Naive thymus-derived CD4-positive, alpha-beta T cell (primary cell): ENCODE measurements at regions of chr22 and their contacts with region 1.

Region 1: DNA sequence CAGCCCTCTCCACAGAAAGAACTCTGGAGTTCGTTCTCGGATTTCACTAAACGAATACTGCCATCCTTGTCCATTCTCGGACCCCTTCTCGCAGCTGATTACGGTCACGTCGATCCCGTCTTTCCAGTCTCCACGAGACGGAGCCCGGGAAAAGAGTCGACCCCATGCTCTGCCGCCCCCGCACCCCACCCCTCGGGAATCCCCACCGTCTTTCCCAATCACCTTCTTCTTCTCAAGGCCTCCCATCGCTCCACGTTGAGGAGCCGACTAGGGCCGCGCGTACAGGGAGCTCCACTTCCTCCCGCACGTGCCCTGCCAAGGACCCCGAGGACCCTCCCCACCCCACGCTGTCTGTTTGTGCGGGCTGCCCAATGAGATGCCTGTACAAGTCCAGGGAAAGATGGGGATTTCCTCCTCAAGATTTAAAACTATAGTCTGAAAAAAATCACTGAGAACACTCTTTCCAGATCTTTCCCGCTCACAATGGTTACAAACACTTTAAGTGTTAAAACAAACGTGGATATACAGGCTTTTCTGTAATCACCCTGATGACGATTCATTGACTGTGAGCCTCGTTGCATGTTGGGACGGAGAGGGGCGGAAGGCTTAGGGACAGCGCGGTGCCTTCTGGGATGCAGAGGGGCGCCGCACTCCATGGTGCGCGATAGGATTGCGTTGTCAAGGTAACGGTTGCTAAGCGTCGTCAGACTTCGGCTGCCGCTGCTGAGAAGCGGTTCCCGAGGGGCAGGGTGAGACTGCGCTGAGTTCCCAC is at the start of gene PES1:
- DNase-seq: peak; percentile 80 to 98 (median 96)
- ATAC-seq: peak; percentile 99
- H3K4me3 ChIP-seq: peak within 1 kb of the TSS; percentile 85
- H3K4me3 Mint-ChIP-seq: no peak within 1 kb of the TSS
- H3K27ac ChIP-seq: peak within 1 kb of the TSS; percentile 85
- H3K27ac Mint-ChIP-seq: no peak within 1 kb of the TSS
- H3K4me1 ChIP-seq: peaks cover 8 to 12% of the 10 kb centered on the region in 2 donors
- H3K4me1 Mint-ChIP-seq: peaks cover 0 to 12% (median 0%) of the 10 kb centered on the region in 7 donors
- H3K27me3 ChIP-seq: no peaks in the 10 kb centered on the region
- H3K27me3 Mint-ChIP-seq: peaks cover 0 to 23% (median 0%) of the 10 kb centered on the region in 5 donors
- total RNA-seq, gene PES1: 40.6 to 84.2 (median 56.3) TPM

Region 2: GRCh38 chr22:29603358-29604075 is 988.3 kb before region 1 on chr22 and contains the start of gene NF2:
- CTCF ChIA-PET with region 1: no interaction called
- POLR2A ChIA-PET with region 1: no interaction called
- intact Hi-C with region 1: loop called in 1 of 2 experiments (anchors 1 kb)
- DNase-seq: peak; percentile 96 to 99 (median 98)
- ATAC-seq: peak; percentile 98
- H3K4me3 ChIP-seq: peak within 1 kb of the TSS; percentile 92
- H3K4me3 Mint-ChIP-seq: peak within 1 kb of the TSS; percentile 85 to 98 (median 96)
- H3K27ac ChIP-seq: peak within 1 kb of the TSS; percentile 91
- H3K27ac Mint-ChIP-seq: peak within 1 kb of the TSS; percentile 91 to 99 (median 98)
- H3K4me1 ChIP-seq: peaks cover 11 to 16% of the 10 kb centered on the region in 2 donors
- H3K4me1 Mint-ChIP-seq: peaks cover 13 to 40% (median 28%) of the 10 kb centered on the region in 7 donors
- H3K27me3 ChIP-seq: no peaks in the 10 kb centered on the region
- H3K27me3 Mint-ChIP-seq: no peaks in the 10 kb centered on the region
- total RNA-seq, gene NF2: 27.6 to 56.3 (median 28.3) TPM

Region 3: GRCh38 chr22:30356449-30357235 is 235.1 kb before region 1 on chr22 and contains the starts of genes CCDC157 and SF3A1:
- CTCF ChIA-PET with region 1: no interaction called
- POLR2A ChIA-PET with region 1: no interaction called
- intact Hi-C with region 1: loop called in 1 of 2 experiments (anchors 2 kb)
- DNase-seq: peak; percentile 78 to 90 (median 86)
- ATAC-seq: peak; percentile 94
- H3K4me3 ChIP-seq: peak within 1 kb of the TSS; percentile 94
- H3K4me3 Mint-ChIP-seq: peak within 1 kb of the TSS; percentile 92 to 99 (median 95)
- H3K27ac ChIP-seq: peak within 1 kb of the TSS; percentile 100
- H3K27ac Mint-ChIP-seq: peak within 1 kb of the TSS; percentile 86 to 99 (median 95)
- H3K4me1 ChIP-seq: peaks cover 32 to 37% of the 10 kb centered on the region in 2 donors
- H3K4me1 Mint-ChIP-seq: peaks cover 35 to 62% (median 54%) of the 10 kb centered on the region in 7 donors
- H3K27me3 ChIP-seq: no peaks in the 10 kb centered on the region
- H3K27me3 Mint-ChIP-seq: peaks cover 0 to 6% (median 0%) of the 10 kb centered on the region in 5 donors
- total RNA-seq, gene CCDC157: 1.8 to 6.9 (median 3.2) TPM
- total RNA-seq, gene SF3A1: 267 to 341 (median 284) TPM

Region 4: GRCh38 chr22:30453731-30454510 is 137.9 kb before region 1 on chr22:
- CTCF ChIA-PET with region 1: no interaction called
- POLR2A ChIA-PET with region 1: no interaction called
- intact Hi-C with region 1: no loop called
- DNase-seq: peak in 2 of 9 donors; percentile 25 to 43
- ATAC-seq: no peak
- H3K4me3 ChIP-seq: no peak overlapping the region
- H3K4me3 Mint-ChIP-seq: no peak overlapping the region
- H3K27ac ChIP-seq: no peak overlapping the region
- H3K27ac Mint-ChIP-seq: no peak overlapping the region
- H3K4me1 ChIP-seq: no peaks in the 10 kb centered on the region
- H3K4me1 Mint-ChIP-seq: peaks cover 0 to 2% (median 0%) of the 10 kb centered on the region in 7 donors
- H3K27me3 ChIP-seq: no peaks in the 10 kb centered on the region
- H3K27me3 Mint-ChIP-seq: peaks cover 10 to 26% (median 15%) of the 10 kb centered on the region in 5 donors

Region 5: GRCh38 chr22:30474683-30475424 is 116.9 kb before region 1 on chr22:
- CTCF ChIA-PET with region 1: no interaction called
- POLR2A ChIA-PET with region 1: no interaction called
- intact Hi-C with region 1: no loop called
- DNase-seq: peak in 4 of 9 donors; percentile 10 to 45 (median 28)
- ATAC-seq: peak; percentile 74
- H3K4me3 ChIP-seq: no peak overlapping the region
- H3K4me3 Mint-ChIP-seq: no peak overlapping the region
- H3K27ac ChIP-seq: no peak overlapping the region
- H3K27ac Mint-ChIP-seq: peak overlapping the region in 2 of 9 donors; percentile 14 to 23
- H3K4me1 ChIP-seq: no peaks in the 10 kb centered on the region
- H3K4me1 Mint-ChIP-seq: peaks cover 0 to 13% (median 0%) of the 10 kb centered on the region in 7 donors
- H3K27me3 ChIP-seq: no peaks in the 10 kb centered on the region
- H3K27me3 Mint-ChIP-seq: peaks cover 11 to 25% (median 16%) of the 10 kb centered on the region in 5 donors

Region 6: DNA sequence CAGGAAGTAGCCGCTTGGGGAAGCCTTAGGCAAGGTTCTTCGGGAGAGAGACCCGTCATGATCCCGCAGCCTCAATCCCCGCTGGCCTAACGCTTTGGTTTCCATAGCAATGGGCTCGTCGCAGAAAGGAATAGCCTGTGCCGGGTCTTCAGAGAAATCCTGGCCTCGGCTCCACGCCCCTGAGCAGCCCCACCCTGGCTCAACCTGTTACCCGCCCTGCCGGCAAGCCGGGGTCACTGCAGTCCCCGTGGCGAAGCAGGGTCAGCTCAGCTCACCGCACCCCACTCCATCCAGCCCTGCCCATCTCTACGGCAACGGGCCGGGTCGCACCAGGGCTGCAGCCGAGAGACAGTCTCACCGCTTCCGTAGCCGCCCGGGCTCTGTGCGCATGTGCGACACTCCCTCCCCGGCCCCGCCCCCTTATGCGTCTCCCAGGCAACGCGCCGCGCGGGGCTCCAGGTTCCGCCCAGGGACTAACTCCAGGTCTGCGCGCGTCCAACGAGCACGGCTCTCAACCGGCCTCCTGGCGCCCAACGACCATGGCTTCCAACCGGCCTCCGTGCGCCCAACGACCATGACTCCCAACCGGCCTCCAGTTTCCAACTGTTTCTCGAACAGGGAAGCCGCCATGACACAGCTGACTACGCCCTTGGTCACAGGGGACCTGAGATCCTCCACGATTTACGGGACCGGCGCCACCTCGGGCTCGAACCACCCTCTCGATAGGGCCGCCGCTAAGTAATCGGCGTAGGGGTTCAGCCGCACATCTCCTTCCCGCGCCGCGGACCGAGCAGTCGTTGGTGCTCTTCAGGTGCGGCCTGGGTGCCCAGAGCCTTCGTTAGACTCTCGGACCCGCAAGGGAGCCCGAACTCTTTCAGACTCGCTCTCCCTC is 76.0 kb after region 1 on chr22 and contains the start of gene DUSP18:
- CTCF ChIA-PET with region 1: no interaction called
- POLR2A ChIA-PET with region 1: no interaction called
- intact Hi-C with region 1: loop called (anchors 1 to 2 kb)
- DNase-seq: peak; percentile 87 to 95 (median 92)
- ATAC-seq: peak; percentile 96
- H3K4me3 ChIP-seq: peak within 1 kb of the TSS; percentile 98
- H3K4me3 Mint-ChIP-seq: peak within 1 kb of the TSS; percentile 90 to 98 (median 95)
- H3K27ac ChIP-seq: peak within 1 kb of the TSS; percentile 71
- H3K27ac Mint-ChIP-seq: peak within 1 kb of the TSS; percentile 74 to 97 (median 91)
- H3K4me1 ChIP-seq: peaks cover 4 to 6% of the 10 kb centered on the region in 2 donors
- H3K4me1 Mint-ChIP-seq: peaks cover 17 to 30% (median 24%) of the 10 kb centered on the region in 7 donors
- H3K27me3 ChIP-seq: no peaks in the 10 kb centered on the region
- H3K27me3 Mint-ChIP-seq: peaks cover 0 to 4% (median 0%) of the 10 kb centered on the region in 5 donors
- total RNA-seq, gene DUSP18: 7.4 to 18.5 (median 14.1) TPM

Region 7: GRCh38 chr22:31107178-31107893 is 515.6 kb after region 1 on chr22 and contains the start of gene SELENOM:
- CTCF ChIA-PET with region 1: no interaction called
- POLR2A ChIA-PET with region 1: no interaction called
- intact Hi-C with region 1: loop called in 1 of 2 experiments (anchors 1 kb)
- DNase-seq: peak; percentile 73 to 89 (median 84)
- ATAC-seq: peak; percentile 98
- H3K4me3 ChIP-seq: peak within 1 kb of the TSS; percentile 94
- H3K4me3 Mint-ChIP-seq: peak within 1 kb of the TSS; percentile 88 to 98 (median 93)
- H3K27ac ChIP-seq: peak within 1 kb of the TSS; percentile 86
- H3K27ac Mint-ChIP-seq: peak within 1 kb of the TSS; percentile 81 to 96 (median 90)
- H3K4me1 ChIP-seq: peaks cover 8 to 16% of the 10 kb centered on the region in 2 donors
- H3K4me1 Mint-ChIP-seq: peaks cover 12 to 26% (median 20%) of the 10 kb centered on the region in 7 donors
- H3K27me3 ChIP-seq: no peaks in the 10 kb centered on the region
- H3K27me3 Mint-ChIP-seq: peaks cover 0 to 3% (median 0%) of the 10 kb centered on the region in 5 donors
- total RNA-seq, gene SELENOM: 9.1 to 71.5 (median 68.6) TPM

Region 8: DNA sequence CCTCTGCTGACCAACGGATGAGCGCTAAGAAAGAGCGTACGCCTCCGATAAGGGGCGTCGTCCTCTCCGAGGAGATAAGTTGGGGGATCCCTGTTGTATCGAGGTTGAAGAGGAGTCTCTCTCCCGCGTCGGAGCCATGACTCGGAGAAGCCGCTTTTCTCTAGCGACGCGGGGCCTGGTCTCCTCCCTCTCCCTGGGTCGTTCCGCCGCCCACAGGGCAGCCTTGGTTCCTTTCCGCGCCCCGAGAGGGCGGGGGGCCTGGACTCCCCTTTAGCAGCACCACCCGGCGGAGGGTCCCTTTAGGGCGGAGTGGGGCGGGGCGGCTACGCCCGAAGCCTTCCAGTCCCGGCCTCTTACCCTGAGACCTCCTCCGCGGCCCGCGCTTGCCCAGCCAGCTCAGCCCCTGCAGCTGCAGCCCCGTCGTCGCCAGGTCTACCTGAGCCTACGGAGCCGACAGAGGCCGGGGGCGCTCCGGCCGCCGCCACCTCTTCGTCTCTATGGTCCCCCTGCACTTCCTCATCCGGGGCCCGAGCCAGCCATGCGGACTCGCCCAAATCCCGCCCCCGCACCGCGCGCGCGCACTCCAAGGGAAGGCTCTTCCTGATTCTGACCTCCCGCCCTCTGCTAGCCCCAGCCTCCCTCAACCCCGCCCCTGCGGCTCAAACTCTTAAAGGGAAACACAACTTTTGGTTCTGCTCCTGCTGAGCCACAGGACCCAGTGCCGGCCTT is 1158.0 kb after region 1 on chr22 and contains the start of gene PRR14L:
- CTCF ChIA-PET with region 1: no interaction called
- POLR2A ChIA-PET with region 1: no interaction called
- intact Hi-C with region 1: loop called (anchors 5 kb)
- DNase-seq: peak; percentile 94 to 100 (median 98)
- ATAC-seq: peak; percentile 86
- H3K4me3 ChIP-seq: peak within 1 kb of the TSS; percentile 92
- H3K4me3 Mint-ChIP-seq: peak within 1 kb of the TSS; percentile 87 to 97 (median 94)
- H3K27ac ChIP-seq: peak within 1 kb of the TSS; percentile 83
- H3K27ac Mint-ChIP-seq: peak within 1 kb of the TSS; percentile 82 to 98 (median 96)
- H3K4me1 ChIP-seq: peaks cover 31 to 37% of the 10 kb centered on the region in 2 donors
- H3K4me1 Mint-ChIP-seq: peaks cover 36 to 65% (median 59%) of the 10 kb centered on the region in 7 donors
- H3K27me3 ChIP-seq: no peaks in the 10 kb centered on the region
- H3K27me3 Mint-ChIP-seq: peaks cover 0 to 2% (median 0%) of the 10 kb centered on the region in 5 donors
- total RNA-seq, gene PRR14L: 43.1 to 82.6 (median 66.9) TPM